Breast epithelium (tissue), 4 donors: ENCODE measurements at regions of chr12 and their contacts with region 1.

Region 1: GRCh38 chr12:71671816-71672215 is 7.7 kb downstream of the THAP2 start:
- DNase-seq: no peak
- H3K4me3 ChIP-seq: no peak overlapping the region
- H3K27ac ChIP-seq: no peak overlapping the region
- H3K4me1 ChIP-seq: no peaks in the 10 kb centered on the region
- H3K27me3 ChIP-seq: no peaks in the 10 kb centered on the region
- CTCF ChIP-seq: no peak
- POLR2A ChIP-seq: no peak

Region 2: GRCh38 chr12:71731751-71732712 is 60.2 kb after region 1 on chr12:
- intact Hi-C with region 1: no loop called
- DNase-seq: no peak
- H3K4me3 ChIP-seq: no peak overlapping the region
- H3K27ac ChIP-seq: no peak overlapping the region
- H3K4me1 ChIP-seq: no peaks in the 10 kb centered on the region
- H3K27me3 ChIP-seq: no peaks in the 10 kb centered on the region
- CTCF ChIP-seq: no peak
- POLR2A ChIP-seq: no peak

Region 3: GRCh38 chr12:71748081-71748850 is 76.5 kb after region 1 on chr12:
- intact Hi-C with region 1: loop called (anchors 2 kb)
- DNase-seq: no peak
- H3K4me3 ChIP-seq: no peak overlapping the region
- H3K27ac ChIP-seq: no peak overlapping the region
- H3K4me1 ChIP-seq: no peaks in the 10 kb centered on the region
- H3K27me3 ChIP-seq: no peaks in the 10 kb centered on the region
- CTCF ChIP-seq: no peak
- POLR2A ChIP-seq: no peak

Region 4: DNA sequence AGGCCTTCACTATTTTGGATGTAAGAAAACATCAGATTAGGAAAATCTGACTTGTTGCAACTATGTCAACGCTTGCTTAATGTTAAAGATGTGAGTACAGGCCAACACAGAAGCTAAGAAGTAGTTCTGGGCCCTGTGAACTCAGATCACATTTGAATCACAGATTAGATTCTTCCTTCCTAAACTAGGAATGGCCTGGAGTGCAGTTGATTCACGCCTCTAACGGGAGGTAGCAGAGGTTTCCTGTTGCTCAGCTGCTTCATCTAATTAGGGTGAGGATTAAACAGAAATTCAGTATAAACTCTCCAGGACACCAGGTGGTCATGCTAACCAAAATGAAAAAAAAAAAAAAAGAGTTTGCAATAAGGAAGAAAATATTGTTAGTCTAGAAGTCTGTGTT is 914.6 kb after region 1 on chr12:
- intact Hi-C with region 1: no loop called
- DNase-seq: no peak
- H3K4me3 ChIP-seq: no peak overlapping the region
- H3K27ac ChIP-seq: no peak overlapping the region
- H3K4me1 ChIP-seq: no peaks in the 10 kb centered on the region
- H3K27me3 ChIP-seq: no peaks in the 10 kb centered on the region
- CTCF ChIP-seq: no peak
- POLR2A ChIP-seq: no peak